ENCODE measurements at regions of chr6 and their contacts with region 1.

Region 1: GRCh38 chr6:30678964-30679726 is 6.3 kb upstream of the DHX16 start:
- DNase-seq: peak; percentile 89 to 95 (median 92)
- H3K4me3 ChIP-seq: peak overlapping the region in 1 of 3 donors; percentile 17
- H3K27ac ChIP-seq: no peak overlapping the region
- H3K4me1 ChIP-seq: peaks cover 0 to 15% (median 7%) of the 10 kb centered on the region in 3 donors
- H3K27me3 ChIP-seq: no peaks in the 10 kb centered on the region
- CTCF ChIP-seq: peak; percentile 100

Region 2: GRCh38 chr6:30719791-30720737 is 40.9 kb after region 1 on chr6 and contains the start of gene TUBB:
- intact Hi-C with region 1: loop called (anchors 5 kb)
- DNase-seq: peak; percentile 98 to 99 (median 99)
- H3K4me3 ChIP-seq: peak within 1 kb of the TSS; percentile 93 to 98 (median 94)
- H3K27ac ChIP-seq: peak within 1 kb of the TSS; percentile 92 to 95
- H3K4me1 ChIP-seq: peaks cover 4 to 10% (median 4%) of the 10 kb centered on the region in 3 donors
- H3K27me3 ChIP-seq: no peaks in the 10 kb centered on the region
- CTCF ChIP-seq: no peak
- total RNA-seq, gene TUBB: 295 TPM

Region 3: DNA sequence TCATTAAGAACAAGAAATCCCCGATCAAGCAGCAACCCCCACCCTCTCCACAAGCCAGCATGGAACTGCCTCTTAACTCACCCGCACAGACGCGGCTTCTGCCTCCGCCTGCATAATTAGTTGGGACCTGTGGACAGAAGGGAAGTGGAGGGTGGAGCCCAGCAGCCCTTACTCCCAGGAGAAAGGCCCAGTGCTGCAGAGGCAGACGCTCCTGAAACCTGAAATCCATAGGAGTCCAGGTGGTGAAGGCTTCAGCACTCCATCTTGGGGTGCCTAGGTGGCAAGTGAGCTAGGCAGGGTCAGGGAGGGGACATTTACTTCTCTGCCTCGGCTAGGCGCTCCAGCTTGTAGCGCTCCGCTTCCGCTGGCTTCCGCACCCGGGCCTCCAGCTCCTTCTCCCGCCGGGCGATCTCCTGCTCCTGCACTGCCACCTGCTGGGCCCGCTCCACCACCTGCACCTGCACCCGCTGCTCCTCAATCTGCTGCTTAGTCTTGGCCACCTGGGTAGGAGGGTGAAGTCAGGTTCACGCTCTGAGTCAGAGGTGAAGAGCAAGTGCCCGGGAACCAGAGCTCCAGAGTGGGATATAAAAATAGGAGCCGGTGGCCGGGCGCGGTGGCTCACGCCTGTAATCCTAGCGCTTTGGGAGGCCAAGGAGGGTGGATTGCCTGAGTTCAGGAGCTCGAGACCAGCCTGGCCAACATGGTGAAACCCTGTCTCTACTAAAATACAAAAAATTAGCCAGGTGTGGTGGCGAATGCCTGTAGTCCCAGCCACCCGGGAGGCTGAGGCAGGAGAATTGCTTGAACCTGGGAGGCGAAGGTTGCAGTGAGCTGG is 51.7 kb after region 1 on chr6:
- intact Hi-C with region 1: loop called (anchors 5 kb)
- DNase-seq: peak; percentile 89 to 92 (median 90)
- H3K4me3 ChIP-seq: peak overlapping the region in 1 of 3 donors; percentile 19
- H3K27ac ChIP-seq: no peak overlapping the region
- H3K4me1 ChIP-seq: peaks cover 0 to 11% (median 0%) of the 10 kb centered on the region in 3 donors
- H3K27me3 ChIP-seq: no peaks in the 10 kb centered on the region
- CTCF ChIP-seq: peak; percentile 76

Region 4: GRCh38 chr6:31143148-31143547 is 464.0 kb after region 1 on chr6:
- intact Hi-C with region 1: no loop called
- DNase-seq: no peak
- H3K4me3 ChIP-seq: no peak overlapping the region
- H3K27ac ChIP-seq: no peak overlapping the region
- H3K4me1 ChIP-seq: peaks cover 0 to 3% (median 0%) of the 10 kb centered on the region in 3 donors
- H3K27me3 ChIP-seq: no peaks in the 10 kb centered on the region
- CTCF ChIP-seq: no peak